ENCODE measurements at regions of chr6 and their contacts with region 1.

Region 1: DNA sequence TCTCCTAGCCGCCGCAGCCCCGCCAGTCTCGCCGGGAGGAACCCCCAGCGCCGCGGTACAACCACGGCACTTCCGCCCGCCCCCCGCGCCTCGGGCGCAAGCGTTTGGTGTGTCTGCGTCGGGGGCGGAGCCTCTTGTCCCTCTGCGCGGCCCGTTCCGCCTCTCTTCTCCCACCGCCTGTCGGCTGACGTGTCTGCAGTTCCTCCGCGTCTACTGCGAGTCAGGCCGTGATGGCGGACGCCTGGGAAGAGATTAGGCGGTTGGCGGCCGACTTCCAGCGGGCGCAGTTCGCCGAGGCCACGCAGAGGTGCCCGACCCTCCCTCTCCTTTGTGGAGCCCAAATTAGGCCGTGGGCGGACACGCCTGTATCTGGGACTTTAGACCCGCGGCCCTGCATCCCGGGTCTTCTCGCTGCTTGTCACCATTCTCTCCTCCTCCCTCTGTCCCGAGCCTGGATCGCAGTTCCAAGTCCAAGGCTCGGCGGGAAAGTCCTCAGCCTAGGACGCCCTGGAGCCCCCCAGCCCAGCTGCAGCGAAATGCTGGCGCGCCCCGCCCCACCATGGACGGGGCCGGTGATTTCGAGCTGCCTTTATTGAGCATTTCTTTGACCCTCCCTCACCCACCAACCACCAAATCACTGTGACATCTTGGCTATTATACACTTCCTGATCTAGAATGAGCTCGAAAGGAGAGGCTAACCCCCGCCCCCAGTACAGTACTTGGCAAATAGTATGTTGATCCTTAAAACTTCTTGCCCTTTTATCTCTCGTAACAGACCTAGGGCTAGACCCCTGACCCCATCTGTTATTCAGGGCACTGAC is at the start of gene UFL1:
- DNase-seq: peak; percentile 87 to 97 (median 94)
- ATAC-seq: peak; percentile 93 to 97 (median 95)
- H3K4me3 ChIP-seq: peak within 1 kb of the TSS; percentile 86 to 89
- H3K4me3 Mint-ChIP-seq: peak within 1 kb of the TSS; percentile 100
- H3K27ac ChIP-seq: peak within 1 kb of the TSS; percentile 98
- H3K27ac Mint-ChIP-seq: peak within 1 kb of the TSS; percentile 100
- H3K4me1 ChIP-seq: peaks cover 6 to 23% of the 10 kb centered on the region in 2 experiments
- H3K4me1 Mint-ChIP-seq: peaks cover 28 to 44% (median 41%) of the 10 kb centered on the region in 3 donors
- H3K27me3 ChIP-seq: no peaks in the 10 kb centered on the region
- H3K27me3 Mint-ChIP-seq: no peaks in the 10 kb centered on the region
- total RNA-seq, gene UFL1: 19.3 to 29.4 (median 27.7) TPM

Region 2: DNA sequence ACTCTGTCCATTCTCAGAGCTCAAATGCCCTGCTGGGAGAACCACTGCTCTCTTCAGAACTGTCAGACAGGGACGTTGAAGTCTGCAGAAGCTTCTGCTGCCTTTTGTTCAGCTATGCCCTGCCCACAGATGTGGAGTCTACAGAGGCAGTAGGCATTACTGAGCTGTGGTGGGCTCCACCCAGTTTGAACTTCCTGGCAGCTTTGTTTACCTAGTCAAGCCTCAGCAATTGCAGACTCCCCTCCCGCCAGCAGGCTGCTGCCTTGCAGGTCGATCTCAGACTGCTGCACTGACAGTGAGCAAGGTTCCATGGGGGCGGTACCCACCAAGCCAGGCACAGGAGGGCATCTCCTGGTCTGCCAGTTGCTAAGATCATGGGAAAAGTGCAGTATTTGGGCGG is 22.1 kb before region 1 on chr6:
- CTCF ChIA-PET with region 1: interaction called, 4 to 22 read pairs
- POLR2A ChIA-PET with region 1: interaction called, 3 to 7 read pairs
- DNase-seq: peak; percentile 45 to 82 (median 64)
- ATAC-seq: peak; percentile 97 to 100 (median 99)
- H3K4me3 ChIP-seq: peak overlapping the region in 1 of 2 donors; percentile 33
- H3K4me3 Mint-ChIP-seq: peak overlapping the region in 2 of 3 donors; percentile 34 to 54
- H3K27ac ChIP-seq: peak overlapping the region; percentile 1
- H3K27ac Mint-ChIP-seq: peak overlapping the region; percentile 90
- H3K4me1 ChIP-seq: peaks cover 3 to 12% of the 10 kb centered on the region in 2 experiments
- H3K4me1 Mint-ChIP-seq: peaks cover 40 to 46% (median 42%) of the 10 kb centered on the region in 3 donors
- H3K27me3 ChIP-seq: no peaks in the 10 kb centered on the region
- H3K27me3 Mint-ChIP-seq: no peaks in the 10 kb centered on the region

Region 3: DNA sequence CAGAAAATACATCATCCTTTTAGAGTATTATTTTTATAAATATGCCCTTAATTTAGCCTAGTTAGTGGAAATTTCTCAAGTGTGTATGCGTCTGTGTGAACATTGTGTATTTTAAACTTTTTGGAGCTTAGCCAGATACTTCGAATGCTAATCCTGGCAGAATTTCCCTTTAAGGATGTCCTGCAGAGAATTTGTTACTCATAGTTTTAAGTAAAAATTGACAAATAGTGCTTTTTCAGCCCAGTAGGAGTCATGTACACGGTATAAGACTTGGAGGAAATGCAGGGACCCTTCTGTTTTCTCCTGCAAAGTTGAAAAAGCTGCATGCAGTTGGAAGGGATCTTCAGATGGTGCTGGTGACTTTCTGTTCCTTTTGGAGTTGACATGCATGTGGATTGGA is 41.0 kb after region 1 on chr6 and contains the start of gene FHL5:
- CTCF ChIA-PET with region 1: no interaction called
- POLR2A ChIA-PET with region 1: no interaction called
- DNase-seq: no peak
- ATAC-seq: no peak
- H3K4me3 ChIP-seq: no peak within 1 kb of the TSS
- H3K4me3 Mint-ChIP-seq: no peak within 1 kb of the TSS
- H3K27ac ChIP-seq: no peak within 1 kb of the TSS
- H3K27ac Mint-ChIP-seq: no peak within 1 kb of the TSS
- H3K4me1 ChIP-seq: no peaks in the 10 kb centered on the region
- H3K4me1 Mint-ChIP-seq: peaks cover 0 to 3% (median 0%) of the 10 kb centered on the region in 3 donors
- H3K27me3 ChIP-seq: peaks cover 0 to 2% of the 10 kb centered on the region in 2 experiments
- H3K27me3 Mint-ChIP-seq: peaks cover 0 to 3% of the 10 kb centered on the region in 2 donors
- total RNA-seq, gene FHL5: not detected